T-cell (primary cell): ENCODE measurements at regions of chr2 and their contacts with region 1.

Region 1: GRCh38 chr2:65281627-65282351 is 54.2 kb downstream of the ACTR2 start:
- DNase-seq: no peak
- ATAC-seq: no peak
- H3K4me3 ChIP-seq: no peak overlapping the region
- H3K4me3 Mint-ChIP-seq: no peak overlapping the region
- H3K27ac ChIP-seq: no peak overlapping the region
- H3K27ac Mint-ChIP-seq: no peak overlapping the region
- H3K4me1 ChIP-seq: peaks cover 8 to 13% of the 10 kb centered on the region in 2 experiments
- H3K4me1 Mint-ChIP-seq: peaks cover 8 to 14% (median 13%) of the 10 kb centered on the region in 3 donors
- H3K27me3 ChIP-seq: no peaks in the 10 kb centered on the region
- H3K27me3 Mint-ChIP-seq: no peaks in the 10 kb centered on the region

Region 2: DNA sequence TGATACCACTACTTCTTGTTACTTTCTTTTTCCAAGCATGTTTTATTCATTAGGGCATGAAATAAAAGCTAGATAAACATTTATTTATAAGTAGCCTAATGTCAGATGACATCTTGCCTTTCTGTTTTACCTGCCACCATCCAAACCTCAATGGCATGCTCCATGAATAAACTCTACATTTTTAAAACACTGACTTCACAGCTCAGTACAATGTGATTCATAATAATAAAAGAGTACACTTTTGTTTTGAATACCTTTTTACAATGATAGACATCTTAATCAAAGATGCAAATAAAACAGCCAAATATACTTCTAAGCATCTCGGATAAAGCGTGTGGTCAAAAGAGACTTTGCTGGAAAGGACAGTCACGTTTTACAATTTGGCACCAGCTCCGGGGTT is 62.4 kb after region 1 on chr2:
- CTCF ChIA-PET with region 1: no interaction called
- POLR2A ChIA-PET with region 1: interaction called in 1 of 2 experiments, 12 read pairs
- DNase-seq: no peak
- ATAC-seq: no peak
- H3K4me3 ChIP-seq: no peak overlapping the region
- H3K4me3 Mint-ChIP-seq: no peak overlapping the region
- H3K27ac ChIP-seq: no peak overlapping the region
- H3K27ac Mint-ChIP-seq: no peak overlapping the region
- H3K4me1 ChIP-seq: peaks cover 0 to 2% of the 10 kb centered on the region in 2 experiments
- H3K4me1 Mint-ChIP-seq: peaks cover 0 to 2% (median 0%) of the 10 kb centered on the region in 3 donors
- H3K27me3 ChIP-seq: no peaks in the 10 kb centered on the region
- H3K27me3 Mint-ChIP-seq: no peaks in the 10 kb centered on the region